ENCODE measurements at regions of chr20 and their contacts with region 1.

Region 1: DNA sequence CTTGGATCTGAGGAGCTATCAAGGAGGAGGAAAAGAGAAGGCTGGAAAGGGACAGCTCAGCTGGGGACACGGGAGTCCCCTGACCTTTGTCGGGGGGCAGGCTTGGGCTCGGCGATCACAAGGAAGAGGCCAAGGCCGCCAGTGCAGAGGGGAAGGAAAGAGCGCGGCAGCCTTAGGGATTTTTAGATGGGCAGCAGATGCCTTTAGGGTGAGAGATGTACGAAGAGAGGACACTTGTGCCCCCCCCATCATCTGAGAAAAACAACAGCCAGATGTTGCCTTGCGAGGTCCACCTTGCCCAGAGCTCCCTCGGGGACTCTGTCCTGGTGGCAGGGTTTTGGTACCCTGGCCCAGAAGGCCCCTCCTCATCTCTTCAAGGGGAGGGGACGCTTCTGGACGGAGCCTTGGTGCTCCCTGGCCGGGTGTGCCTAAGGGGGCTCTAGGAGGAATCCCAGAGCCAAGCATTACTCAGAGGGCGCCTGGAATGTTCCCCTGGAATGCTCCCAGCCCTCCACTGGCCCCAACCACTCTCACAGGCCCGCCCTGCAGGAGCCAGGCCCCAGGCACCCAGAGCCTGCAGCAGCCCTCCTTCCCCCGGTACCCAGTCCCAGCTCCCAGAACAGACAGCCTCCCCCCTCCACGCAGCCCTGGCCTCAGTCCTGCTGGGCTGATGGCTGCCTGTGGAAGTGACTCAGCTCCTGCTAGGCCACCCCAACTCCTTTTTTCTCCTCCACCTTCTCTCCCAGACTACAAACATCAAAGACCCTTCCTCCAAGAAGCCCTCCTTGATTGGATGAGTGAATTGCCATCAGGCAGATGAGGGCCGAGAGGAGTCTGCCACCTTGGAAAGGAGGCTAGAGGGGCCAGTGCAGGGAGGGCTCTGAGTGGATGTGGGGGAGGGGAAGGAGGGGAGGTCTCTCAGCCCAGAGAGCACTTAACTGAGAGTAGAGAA is 1.8 kb downstream of the ADAM33 start:
- DNase-seq: peak in 2 of 3 donors; percentile 15 to 44
- ATAC-seq: peak; percentile 17
- H3K4me3 ChIP-seq: no peak overlapping the region
- H3K4me1 ChIP-seq: no peaks in the 10 kb centered on the region
- CTCF ChIP-seq: no peak

Region 2: GRCh38 chr20:3710703-3711483 is 30.9 kb after region 1 on chr20:
- intact Hi-C with region 1: loop called (anchors 5 kb)
- DNase-seq: peak in 2 of 3 donors; percentile 79 to 82
- ATAC-seq: peak; percentile 71
- H3K4me3 ChIP-seq: no peak overlapping the region
- H3K4me1 ChIP-seq: no peaks in the 10 kb centered on the region
- CTCF ChIP-seq: peak; percentile 87